Sciatic nerve (tissue), 2 donors: ENCODE measurements at regions of chr17 and their contacts with region 1.

Region 1: GRCh38 chr17:21457051-21458026 is 81.2 kb downstream of the KCNJ12 start:
- DNase-seq: peak; percentile 91
- ATAC-seq: peak; percentile 88

Region 2: GRCh38 chr17:20852239-20852989 is 604.9 kb before region 1 on chr17:
- intact Hi-C with region 1: no loop called
- DNase-seq: peak; percentile 53
- ATAC-seq: peak; percentile 30

Region 3: DNA sequence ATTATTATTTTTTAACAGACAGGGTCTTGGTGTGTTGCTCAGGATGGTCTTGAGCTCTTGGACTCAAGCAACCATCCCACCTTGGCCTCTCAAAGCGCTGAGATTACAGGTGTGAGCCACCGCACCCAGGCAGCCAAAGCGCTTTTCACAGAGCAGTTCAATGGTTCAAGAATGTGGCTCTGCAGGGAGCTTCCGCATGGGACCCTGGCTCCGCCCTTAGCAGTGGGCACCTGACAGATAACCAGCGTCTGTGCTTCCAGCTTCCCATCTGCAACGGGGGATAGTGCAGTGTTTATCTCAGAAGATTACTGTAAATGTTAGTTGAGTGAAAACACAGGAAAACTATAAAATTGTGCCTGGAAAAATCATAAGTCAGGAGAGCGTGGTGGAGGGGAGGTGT is 18.2 kb after region 1 on chr17:
- intact Hi-C with region 1: no loop called
- DNase-seq: no peak
- ATAC-seq: no peak

Region 4: DNA sequence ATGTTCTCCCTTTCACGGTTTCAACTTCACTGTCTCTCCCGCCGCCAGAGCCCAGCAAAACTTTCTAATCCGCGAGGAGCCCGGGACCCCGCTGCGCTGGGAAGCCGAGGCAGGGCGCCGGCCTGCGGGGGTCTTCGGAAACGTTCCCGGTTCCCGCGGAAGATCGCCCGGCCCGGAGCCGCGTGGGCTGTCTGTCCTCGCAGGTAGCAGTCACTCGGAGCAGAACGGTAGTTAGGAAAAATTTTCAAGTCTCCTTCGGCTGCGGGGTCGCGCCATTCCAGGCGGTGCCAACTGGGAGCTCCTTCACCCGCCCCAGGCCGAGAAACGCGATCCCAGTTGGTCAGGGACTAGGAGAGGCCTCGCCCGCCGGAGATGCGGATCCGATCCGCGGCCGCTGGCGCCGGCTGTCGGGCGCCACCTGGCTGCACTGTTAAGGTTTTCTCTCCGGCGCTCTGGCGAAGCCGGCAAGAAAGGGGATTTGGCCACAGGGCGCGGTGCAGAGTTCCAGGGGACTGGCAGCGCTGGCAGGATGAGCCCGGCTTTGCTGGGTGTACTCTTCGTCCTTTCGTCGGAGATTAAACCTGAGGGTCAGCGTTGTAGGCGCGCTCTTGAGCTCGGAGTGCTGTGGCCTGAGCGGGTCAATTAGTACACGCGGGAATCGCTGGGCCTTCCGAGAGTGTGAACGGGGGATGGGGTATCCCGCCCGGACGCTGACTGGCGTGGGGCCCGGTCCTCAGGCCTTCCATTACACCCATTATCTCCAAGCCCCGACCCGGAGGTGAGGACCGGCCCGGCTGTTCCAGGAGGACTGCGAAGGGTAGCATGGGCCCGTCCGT is 54.2 kb after region 1 on chr17:
- intact Hi-C with region 1: loop called (anchors 5 kb)
- DNase-seq: peak; percentile 88
- ATAC-seq: peak; percentile 97

Region 5: DNA sequence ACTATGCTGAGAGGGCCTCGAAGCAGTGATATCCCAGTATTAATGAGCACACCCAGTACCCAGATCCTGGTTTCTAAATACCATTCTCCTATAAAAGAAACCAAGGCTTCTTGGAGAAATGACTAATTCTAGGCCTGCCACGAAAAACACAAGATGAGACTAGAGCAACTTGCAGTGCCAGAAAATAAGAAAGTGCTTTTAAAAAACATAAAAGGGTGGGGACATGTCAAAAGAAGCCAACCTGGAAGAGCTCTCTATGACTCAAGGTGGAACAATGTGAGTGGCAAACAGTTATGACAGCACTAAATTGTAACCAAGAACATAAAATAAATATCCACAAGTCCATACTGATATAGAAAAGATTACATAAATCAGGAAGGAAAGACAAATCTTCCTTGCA is 81.8 kb after region 1 on chr17:
- intact Hi-C with region 1: no loop called
- DNase-seq: no peak
- ATAC-seq: no peak